ENCODE measurements at regions of chr1 and their contacts with region 1.

Region 1: DNA sequence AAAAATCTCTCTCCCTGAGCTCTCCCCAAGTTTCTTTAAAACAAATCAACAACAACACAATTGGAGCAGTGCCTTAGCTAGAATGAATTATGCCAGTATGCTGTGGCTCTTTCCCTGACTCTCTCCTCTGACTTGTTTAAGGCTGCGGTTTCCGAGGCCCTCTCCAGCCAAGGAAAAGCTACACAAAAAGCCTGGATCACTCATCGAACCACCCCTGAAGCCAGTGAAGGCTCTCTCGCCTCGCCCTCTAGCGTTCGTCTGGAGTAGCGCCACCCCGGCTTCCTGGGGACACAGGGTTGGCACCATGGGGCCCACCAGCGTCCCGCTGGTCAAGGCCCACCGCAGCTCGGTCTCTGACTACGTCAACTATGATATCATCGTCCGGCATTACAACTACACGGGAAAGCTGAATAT is 1.9 kb downstream of the S1PR1 start:
- DNase-seq: peak; percentile 83
- ATAC-seq: peak; percentile 13
- H3K4me3 ChIP-seq: peak overlapping the region; percentile 74 to 98 (median 86)
- H3K4me3 Mint-ChIP-seq: peak overlapping the region; percentile 97
- H3K27ac ChIP-seq: peak overlapping the region; percentile 58 to 84
- H3K27ac Mint-ChIP-seq: peak overlapping the region; percentile 92
- H3K4me1 ChIP-seq: peaks cover 51 to 59% of the 10 kb centered on the region in 2 donors
- H3K4me1 Mint-ChIP-seq: peaks cover 66% of the 10 kb centered on the region
- H3K27me3 ChIP-seq: no peaks in the 10 kb centered on the region
- H3K27me3 Mint-ChIP-seq: no peaks in the 10 kb centered on the region
- CTCF ChIP-seq: peak; percentile 95

Region 2: GRCh38 chr1:100895540-100896483 is 342.9 kb before region 1 on chr1 and contains the start of gene SLC30A7:
- CTCF ChIA-PET with region 1: no interaction called
- POLR2A ChIA-PET with region 1: no interaction called
- intact Hi-C with region 1: loop called (anchors 1 kb)
- DNase-seq: peak; percentile 95
- ATAC-seq: peak; percentile 87
- H3K4me3 ChIP-seq: peak within 1 kb of the TSS; percentile 75 to 99 (median 98)
- H3K4me3 Mint-ChIP-seq: peak within 1 kb of the TSS; percentile 94
- H3K27ac ChIP-seq: peak within 1 kb of the TSS; percentile 85 to 97
- H3K27ac Mint-ChIP-seq: peak within 1 kb of the TSS; percentile 94
- H3K4me1 ChIP-seq: peaks cover 10 to 11% of the 10 kb centered on the region in 2 donors
- H3K4me1 Mint-ChIP-seq: peaks cover 32% of the 10 kb centered on the region
- H3K27me3 ChIP-seq: no peaks in the 10 kb centered on the region
- H3K27me3 Mint-ChIP-seq: no peaks in the 10 kb centered on the region
- CTCF ChIP-seq: no peak
- total RNA-seq, gene SLC30A7: 26.7 and 28.6 TPM in 2 replicates

Region 3: GRCh38 chr1:100995198-100995988 is 243.3 kb before region 1 on chr1:
- CTCF ChIA-PET with region 1: interaction called, 10 read pairs
- POLR2A ChIA-PET with region 1: no interaction called
- intact Hi-C with region 1: no loop called
- DNase-seq: peak; percentile 20
- ATAC-seq: peak; percentile 17
- H3K4me3 ChIP-seq: peak overlapping the region in 1 of 5 experiments; percentile 20
- H3K4me3 Mint-ChIP-seq: peak overlapping the region; percentile 20
- H3K27ac ChIP-seq: peak overlapping the region; percentile 35 to 69
- H3K27ac Mint-ChIP-seq: peak overlapping the region; percentile 78
- H3K4me1 ChIP-seq: peaks cover 8 to 11% of the 10 kb centered on the region in 2 donors
- H3K4me1 Mint-ChIP-seq: peaks cover 20% of the 10 kb centered on the region
- H3K27me3 ChIP-seq: no peaks in the 10 kb centered on the region
- H3K27me3 Mint-ChIP-seq: no peaks in the 10 kb centered on the region
- CTCF ChIP-seq: no peak

Region 4: GRCh38 chr1:101112051-101112780 is 126.5 kb before region 1 on chr1:
- CTCF ChIA-PET with region 1: interaction called, 24 read pairs
- POLR2A ChIA-PET with region 1: interaction called, 46 read pairs
- intact Hi-C with region 1: loop called (anchors 1 kb)
- DNase-seq: peak; percentile 90
- ATAC-seq: peak; percentile 95
- H3K4me3 ChIP-seq: peak overlapping the region in 1 of 5 experiments; percentile 14
- H3K4me3 Mint-ChIP-seq: peak overlapping the region; percentile 79
- H3K27ac ChIP-seq: peak overlapping the region; percentile 80 to 95
- H3K27ac Mint-ChIP-seq: peak overlapping the region; percentile 89
- H3K4me1 ChIP-seq: peaks cover 28 to 31% of the 10 kb centered on the region in 2 donors
- H3K4me1 Mint-ChIP-seq: peaks cover 39% of the 10 kb centered on the region
- H3K27me3 ChIP-seq: no peaks in the 10 kb centered on the region
- H3K27me3 Mint-ChIP-seq: no peaks in the 10 kb centered on the region
- CTCF ChIP-seq: peak; percentile 32

Region 5: DNA sequence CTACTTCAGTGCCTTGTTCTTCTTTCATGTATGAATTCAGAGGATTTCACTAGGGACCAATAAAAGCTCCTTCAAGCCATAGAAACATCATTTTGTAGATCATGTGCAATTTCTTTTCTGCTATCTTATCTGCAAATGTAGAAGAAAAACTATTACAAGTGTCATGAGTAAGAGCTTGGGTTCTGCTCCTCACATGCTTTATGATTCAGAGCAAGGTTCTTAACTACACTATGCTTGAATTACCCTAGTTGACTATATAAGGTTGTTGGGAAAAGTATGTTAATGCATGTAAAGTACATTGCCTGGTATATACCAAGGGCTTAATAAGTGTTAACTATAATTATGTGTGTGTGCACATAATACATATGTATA is 93.3 kb before region 1 on chr1:
- CTCF ChIA-PET with region 1: interaction called, 81 read pairs
- POLR2A ChIA-PET with region 1: interaction called, 19 read pairs
- intact Hi-C with region 1: loop called (anchors 2 kb)
- DNase-seq: no peak
- ATAC-seq: no peak
- H3K4me3 ChIP-seq: peak overlapping the region in 1 of 5 experiments; percentile 28
- H3K4me3 Mint-ChIP-seq: peak overlapping the region; percentile 76
- H3K27ac ChIP-seq: peak overlapping the region; percentile 51 to 64
- H3K27ac Mint-ChIP-seq: peak overlapping the region; percentile 83
- H3K4me1 ChIP-seq: peaks cover 12% of the 10 kb centered on the region in 2 donors
- H3K4me1 Mint-ChIP-seq: peaks cover 15% of the 10 kb centered on the region
- H3K27me3 ChIP-seq: no peaks in the 10 kb centered on the region
- H3K27me3 Mint-ChIP-seq: no peaks in the 10 kb centered on the region
- CTCF ChIP-seq: no peak

Region 6: DNA sequence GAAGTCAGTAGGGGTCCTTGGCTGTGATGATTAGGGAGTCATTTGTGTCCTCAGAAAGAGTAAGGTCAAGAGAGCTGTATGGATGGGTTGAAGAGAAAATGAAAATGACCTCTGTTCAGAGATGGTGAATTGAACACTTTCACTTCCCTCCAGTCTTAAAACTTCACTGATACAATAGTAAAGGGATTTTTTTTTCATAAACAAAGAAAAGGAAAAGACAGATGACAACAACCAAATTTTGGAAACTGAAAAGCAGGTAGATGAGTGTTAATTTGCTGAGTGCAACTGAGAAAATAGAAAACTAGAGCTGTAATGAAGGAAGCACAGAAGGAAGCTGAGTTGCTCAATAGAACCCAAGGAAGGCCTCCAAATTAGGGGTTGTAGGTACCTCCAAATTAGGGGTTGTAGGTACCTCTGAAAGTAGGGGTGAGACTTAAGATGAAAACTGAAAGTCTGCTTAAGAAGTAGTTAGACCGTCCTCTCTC is 16.7 kb before region 1 on chr1:
- CTCF ChIA-PET with region 1: interaction called, 7 read pairs
- POLR2A ChIA-PET with region 1: interaction called, 4 read pairs
- intact Hi-C with region 1: loop called (anchors 2 kb)
- DNase-seq: peak; percentile 62
- ATAC-seq: peak; percentile 79
- H3K4me3 ChIP-seq: peak overlapping the region in 1 of 5 experiments; percentile 7
- H3K4me3 Mint-ChIP-seq: peak overlapping the region; percentile 63
- H3K27ac ChIP-seq: peak overlapping the region; percentile 43 to 70
- H3K27ac Mint-ChIP-seq: peak overlapping the region; percentile 83
- H3K4me1 ChIP-seq: peaks cover 18% of the 10 kb centered on the region in 2 donors
- H3K4me1 Mint-ChIP-seq: peaks cover 17% of the 10 kb centered on the region
- H3K27me3 ChIP-seq: no peaks in the 10 kb centered on the region
- H3K27me3 Mint-ChIP-seq: no peaks in the 10 kb centered on the region
- CTCF ChIP-seq: no peak

Region 7: GRCh38 chr1:101346419-101346818 is 107.7 kb after region 1 on chr1:
- CTCF ChIA-PET with region 1: no interaction called
- POLR2A ChIA-PET with region 1: no interaction called
- intact Hi-C with region 1: no loop called
- DNase-seq: no peak
- ATAC-seq: no peak
- H3K4me3 ChIP-seq: no peak overlapping the region
- H3K4me3 Mint-ChIP-seq: no peak overlapping the region
- H3K27ac ChIP-seq: no peak overlapping the region
- H3K27ac Mint-ChIP-seq: no peak overlapping the region
- H3K4me1 ChIP-seq: peaks cover 0 to 5% of the 10 kb centered on the region in 2 donors
- H3K4me1 Mint-ChIP-seq: peaks cover 11% of the 10 kb centered on the region
- H3K27me3 ChIP-seq: no peaks in the 10 kb centered on the region
- H3K27me3 Mint-ChIP-seq: no peaks in the 10 kb centered on the region
- CTCF ChIP-seq: no peak

Region 8: GRCh38 chr1:101357444-101357986 is 118.8 kb after region 1 on chr1:
- CTCF ChIA-PET with region 1: interaction called, 12 read pairs
- POLR2A ChIA-PET with region 1: interaction called, 3 read pairs
- intact Hi-C with region 1: loop called (anchors 5 kb)
- DNase-seq: peak; percentile 88
- ATAC-seq: peak; percentile 98
- H3K4me3 ChIP-seq: no peak overlapping the region
- H3K4me3 Mint-ChIP-seq: no peak overlapping the region
- H3K27ac ChIP-seq: no peak overlapping the region
- H3K27ac Mint-ChIP-seq: no peak overlapping the region
- H3K4me1 ChIP-seq: peaks cover 4 to 7% of the 10 kb centered on the region in 2 donors
- H3K4me1 Mint-ChIP-seq: peaks cover 7% of the 10 kb centered on the region
- H3K27me3 ChIP-seq: no peaks in the 10 kb centered on the region
- H3K27me3 Mint-ChIP-seq: no peaks in the 10 kb centered on the region
- CTCF ChIP-seq: peak; percentile 91

Measured in B cell (primary cell).